ENCODE measurements at regions of chr10 and their contacts with region 1.

Region 1: GRCh38 chr10:97318772-97319651 is at the start of gene FRAT1:
- DNase-seq: peak; percentile 90 to 95 (median 94)
- H3K4me3 ChIP-seq: peak within 1 kb of the TSS; percentile 41 to 96 (median 62)
- H3K27ac ChIP-seq: peak within 1 kb of the TSS; percentile 93 to 98 (median 97)
- H3K4me1 ChIP-seq: peaks cover 10 to 29% of the 10 kb centered on the region in 2 donors
- H3K27me3 ChIP-seq: no peaks in the 10 kb centered on the region
- CTCF ChIP-seq: peak in 1 of 6 experiments; percentile 8
- POLR2A ChIP-seq: peak; percentile 74 to 93
- total RNA-seq, gene FRAT1: 2.0 to 11.1 (median 7.4) TPM

Region 2: GRCh38 chr10:97101166-97101940 is 217.7 kb before region 1 on chr10:
- intact Hi-C with region 1: no loop called
- DNase-seq: no peak
- H3K4me3 ChIP-seq: no peak overlapping the region
- H3K27ac ChIP-seq: no peak overlapping the region
- H3K4me1 ChIP-seq: no peaks in the 10 kb centered on the region
- H3K27me3 ChIP-seq: no peaks in the 10 kb centered on the region
- CTCF ChIP-seq: no peak
- POLR2A ChIP-seq: no peak

Region 3: DNA sequence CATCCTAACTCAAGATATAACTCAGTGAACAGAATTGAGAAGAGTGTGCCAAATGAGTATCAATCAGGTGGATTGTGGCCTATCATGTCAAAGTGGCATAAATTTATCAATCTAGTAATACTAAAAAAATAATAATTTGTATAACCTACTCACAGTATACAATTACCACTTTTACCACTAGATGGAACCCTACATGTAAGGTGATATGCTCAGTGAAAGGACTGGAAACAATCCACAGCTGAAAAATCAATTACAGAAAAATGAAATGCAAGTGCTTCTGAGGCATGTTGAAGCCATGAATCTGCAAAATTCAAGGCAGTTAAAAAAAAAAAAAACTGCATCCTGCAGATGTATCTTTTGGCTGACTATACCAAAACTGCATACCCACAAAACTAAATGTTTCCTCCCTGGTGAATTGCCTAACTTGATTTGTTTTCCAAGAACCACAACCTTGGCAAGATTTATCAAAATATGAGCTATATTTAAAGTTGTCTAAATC is 40.5 kb before region 1 on chr10:
- intact Hi-C with region 1: no loop called
- DNase-seq: no peak
- H3K4me3 ChIP-seq: peak overlapping the region in 1 of 4 donors; percentile 13
- H3K27ac ChIP-seq: peak overlapping the region in 4 of 5 donors; percentile 33 to 59 (median 40)
- H3K4me1 ChIP-seq: peaks cover 21% of the 10 kb centered on the region in 2 donors
- H3K27me3 ChIP-seq: no peaks in the 10 kb centered on the region
- CTCF ChIP-seq: peak; percentile 48 to 86 (median 72)
- POLR2A ChIP-seq: no peak

Region 4: GRCh38 chr10:97334370-97335175 is 15.6 kb after region 1 on chr10 and contains the start of gene FRAT2:
- intact Hi-C with region 1: loop called in 1 of 2 experiments (anchors 2 kb)
- DNase-seq: peak; percentile 90 to 94 (median 93)
- H3K4me3 ChIP-seq: peak within 1 kb of the TSS; percentile 65 to 88 (median 80)
- H3K27ac ChIP-seq: peak within 1 kb of the TSS; percentile 82 to 97 (median 93)
- H3K4me1 ChIP-seq: peaks cover 15 to 18% of the 10 kb centered on the region in 2 donors
- H3K27me3 ChIP-seq: no peaks in the 10 kb centered on the region
- CTCF ChIP-seq: peak in 1 of 6 experiments; percentile 1
- POLR2A ChIP-seq: peak; percentile 55 to 95
- total RNA-seq, gene FRAT2: 3.4 to 17.9 (median 10.0) TPM

Region 5: DNA sequence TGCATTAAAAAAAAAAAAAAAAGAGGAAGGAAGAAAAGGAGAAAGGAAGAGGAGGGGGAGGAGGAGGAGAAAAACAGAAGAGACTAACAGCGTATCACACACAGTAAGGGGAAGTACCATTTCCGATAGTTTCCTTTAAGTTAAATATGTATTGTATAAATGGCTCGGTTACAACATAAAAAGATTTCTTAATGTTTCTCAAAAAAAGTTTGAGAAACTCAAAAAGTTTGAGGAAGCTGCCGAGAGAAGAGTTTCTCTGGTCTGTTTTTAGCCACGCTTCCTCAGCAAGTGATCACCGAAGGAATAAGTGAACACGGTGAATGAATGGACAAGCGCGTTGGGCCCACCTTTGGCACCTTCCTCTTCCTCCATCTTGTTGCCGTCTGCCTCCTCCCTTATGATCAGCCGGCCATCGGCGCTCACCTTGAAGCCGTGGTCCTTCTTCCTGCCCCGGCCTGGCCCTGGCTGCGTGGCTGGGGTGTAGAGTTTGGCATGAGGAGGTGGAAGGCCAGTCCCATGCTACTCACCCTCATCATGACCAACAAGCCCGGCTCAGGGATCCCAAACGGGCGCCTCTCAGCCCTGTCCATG is 46.8 kb after region 1 on chr10:
- intact Hi-C with region 1: no loop called
- DNase-seq: peak in 1 of 7 donors; percentile 6
- H3K4me3 ChIP-seq: no peak overlapping the region
- H3K27ac ChIP-seq: peak overlapping the region in 3 of 5 donors; percentile 34 to 82 (median 38)
- H3K4me1 ChIP-seq: no peaks in the 10 kb centered on the region
- H3K27me3 ChIP-seq: no peaks in the 10 kb centered on the region
- CTCF ChIP-seq: no peak
- POLR2A ChIP-seq: no peak

Region 6: GRCh38 chr10:97596101-97597062 is 277.4 kb after region 1 on chr10:
- intact Hi-C with region 1: no loop called
- DNase-seq: peak; percentile 78 to 90 (median 84)
- H3K4me3 ChIP-seq: no peak overlapping the region
- H3K27ac ChIP-seq: peak overlapping the region; percentile 8 to 98 (median 79)
- H3K4me1 ChIP-seq: peaks cover 12 to 20% of the 10 kb centered on the region in 2 donors
- H3K27me3 ChIP-seq: no peaks in the 10 kb centered on the region
- CTCF ChIP-seq: no peak
- POLR2A ChIP-seq: peak in 1 of 2 donors; percentile 42

Measured in adrenal gland (tissue), 19 donors.